WTC11 (cell line): ENCODE measurements at regions of chr1 and their contacts with region 1.

Region 1: DNA sequence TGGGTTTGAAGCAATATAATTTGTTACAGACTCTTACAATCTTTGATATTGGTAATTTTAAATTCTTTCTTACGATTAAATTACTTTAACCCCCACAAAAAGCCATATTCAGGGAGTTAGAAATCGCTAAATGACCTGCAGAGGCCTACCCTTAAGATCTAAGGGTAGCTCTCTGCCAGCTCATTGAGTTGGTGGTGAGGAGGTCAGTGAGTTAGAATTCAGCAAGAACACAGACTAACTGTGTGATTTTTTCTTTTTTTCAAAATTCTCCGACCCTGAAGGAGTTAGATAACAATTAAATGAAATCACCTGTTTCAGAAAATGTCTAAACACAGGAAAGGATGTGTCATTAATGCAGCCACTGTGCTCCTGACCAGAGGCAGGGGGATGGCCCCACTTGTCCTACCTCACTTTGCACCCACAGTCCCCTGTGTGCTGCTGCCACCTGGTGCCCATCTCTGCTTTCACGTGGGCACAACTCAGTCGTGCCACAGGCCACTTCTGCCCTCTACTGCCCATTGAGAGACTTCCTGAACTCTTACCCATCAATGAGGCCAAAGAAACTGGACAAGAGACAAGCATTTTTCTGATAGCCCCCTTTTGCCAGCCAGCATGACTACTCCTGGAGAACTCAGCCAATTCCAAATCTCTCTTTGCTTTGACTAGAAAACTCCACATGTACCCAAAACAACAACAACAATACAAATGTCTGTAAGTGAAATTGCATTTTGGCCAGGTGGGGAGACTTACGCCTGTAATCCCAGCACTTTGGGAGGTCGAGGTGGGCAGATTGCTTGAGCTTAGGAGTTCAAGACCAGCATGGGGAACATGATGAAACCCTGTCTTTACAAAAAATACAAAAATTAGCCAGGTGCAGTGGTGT is 8.4 kb downstream of the CFAP45 start:
- DNase-seq: peak; percentile 82
- ATAC-seq: peak; percentile 93
- H3K4me3 Mint-ChIP-seq: no peak overlapping the region
- H3K27ac Mint-ChIP-seq: no peak overlapping the region
- H3K4me1 Mint-ChIP-seq: peaks cover 9% of the 10 kb centered on the region
- H3K27me3 Mint-ChIP-seq: peaks cover 2% of the 10 kb centered on the region; the same call in 1 of the 2 replicates
- CTCF ChIP-seq: peak; percentile 79

Region 2: GRCh38 chr1:159780583-159781582 is 110.6 kb before region 1 on chr1 and contains the start of gene DUSP23:
- CTCF ChIA-PET with region 1: interaction called, 51 read pairs
- POLR2A ChIA-PET with region 1: no interaction called
- DNase-seq: peak; percentile 98
- ATAC-seq: peak; percentile 94
- H3K4me3 Mint-ChIP-seq: peak within 1 kb of the TSS; percentile 77
- H3K27ac Mint-ChIP-seq: no peak within 1 kb of the TSS
- H3K4me1 Mint-ChIP-seq: peaks cover 37% of the 10 kb centered on the region
- H3K27me3 Mint-ChIP-seq: peaks cover 12% of the 10 kb centered on the region
- CTCF ChIP-seq: peak; percentile 90
- total RNA-seq, gene DUSP23: 35.2 to 52.1 TPM (median 47.5 TPM) in 3 replicates

Region 3: GRCh38 chr1:159804924-159805323 is 86.6 kb before region 1 on chr1:
- CTCF ChIA-PET with region 1: interaction called, 174 read pairs
- POLR2A ChIA-PET with region 1: no interaction called
- DNase-seq: no peak
- ATAC-seq: no peak
- H3K4me3 Mint-ChIP-seq: no peak overlapping the region
- H3K27ac Mint-ChIP-seq: no peak overlapping the region
- H3K4me1 Mint-ChIP-seq: no peaks in the 10 kb centered on the region
- H3K27me3 Mint-ChIP-seq: peaks cover 6% of the 10 kb centered on the region
- CTCF ChIP-seq: no peak

Region 4: DNA sequence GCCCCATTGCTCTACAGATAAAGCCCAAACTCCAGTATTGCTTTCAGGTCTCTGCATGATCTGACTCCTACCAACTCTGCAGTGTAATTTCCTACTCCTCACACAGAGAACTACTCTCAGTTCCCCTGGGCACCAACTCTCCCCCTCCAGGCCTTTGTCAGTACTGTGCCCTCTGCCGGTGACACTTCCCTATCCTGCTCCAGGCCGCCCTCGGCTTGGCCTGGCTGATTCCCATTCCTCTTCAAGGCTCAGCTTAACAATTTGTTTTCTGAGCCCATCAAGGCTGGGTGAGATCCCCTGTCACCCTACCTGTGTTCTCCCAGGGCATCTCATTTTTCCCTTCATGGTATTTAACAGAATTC is 62.3 kb before region 1 on chr1:
- CTCF ChIA-PET with region 1: interaction called, 19 read pairs
- POLR2A ChIA-PET with region 1: no interaction called
- DNase-seq: peak; percentile 67
- ATAC-seq: peak; percentile 96
- H3K4me3 Mint-ChIP-seq: no peak overlapping the region
- H3K27ac Mint-ChIP-seq: no peak overlapping the region; the same call in 1 of the 2 replicates
- H3K4me1 Mint-ChIP-seq: peaks cover 5% of the 10 kb centered on the region
- H3K27me3 Mint-ChIP-seq: peaks cover 22% of the 10 kb centered on the region
- CTCF ChIP-seq: peak; percentile 18; the same call in 1 of the 2 replicates

Region 5: GRCh38 chr1:159854693-159855192 is 36.8 kb before region 1 on chr1:
- CTCF ChIA-PET with region 1: interaction called, 14 read pairs
- POLR2A ChIA-PET with region 1: no interaction called
- DNase-seq: peak; percentile 68
- ATAC-seq: peak; percentile 83
- H3K4me3 Mint-ChIP-seq: peak overlapping the region; percentile 87
- H3K27ac Mint-ChIP-seq: no peak overlapping the region
- H3K4me1 Mint-ChIP-seq: peaks cover 6% of the 10 kb centered on the region
- H3K27me3 Mint-ChIP-seq: peaks cover 46% of the 10 kb centered on the region
- CTCF ChIP-seq: no peak

Region 6: DNA sequence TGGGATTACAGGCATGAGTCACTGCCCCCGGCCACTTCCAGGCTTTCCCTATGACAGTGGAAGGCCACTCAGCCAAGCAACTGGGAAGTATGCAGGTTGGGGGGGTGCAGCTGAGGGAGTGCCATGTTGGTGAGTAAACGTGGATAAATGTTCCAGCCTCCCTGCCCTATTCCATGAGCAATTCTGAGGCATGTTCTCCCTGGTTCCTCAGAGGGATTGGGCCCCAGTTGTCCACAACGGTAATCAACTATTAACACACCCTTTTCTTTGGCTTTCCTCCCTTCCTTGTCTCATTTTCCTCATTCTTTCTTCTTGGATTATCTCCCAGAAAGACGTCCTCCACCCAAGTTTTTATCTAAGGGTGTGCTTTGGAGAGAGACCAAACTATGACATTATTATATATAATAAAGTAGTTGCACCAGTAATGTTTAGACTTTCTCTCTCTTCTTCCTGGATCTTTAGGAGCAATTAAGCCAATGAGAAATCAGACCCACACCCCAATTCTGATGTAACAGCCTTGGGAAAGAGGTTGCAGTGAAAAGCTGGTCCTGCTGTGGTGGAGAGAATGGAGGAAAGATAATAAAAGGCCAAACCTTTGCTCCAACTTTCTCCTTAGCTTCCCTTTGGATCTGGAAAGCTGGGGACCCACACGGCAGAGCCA is 69.3 kb after region 1 on chr1:
- CTCF ChIA-PET with region 1: no interaction called
- POLR2A ChIA-PET with region 1: no interaction called
- DNase-seq: no peak
- ATAC-seq: no peak
- H3K4me3 Mint-ChIP-seq: no peak overlapping the region
- H3K27ac Mint-ChIP-seq: no peak overlapping the region
- H3K4me1 Mint-ChIP-seq: peaks cover 11% of the 10 kb centered on the region
- H3K27me3 Mint-ChIP-seq: peaks cover 2% of the 10 kb centered on the region
- CTCF ChIP-seq: no peak